Activated CD8-positive, alpha-beta T cell treated with anti-CD3 and anti-CD28 coated beads for 36 hours (primary cell): ENCODE measurements at regions of chr6 and their contacts with region 1.

Region 1: GRCh38 chr6:137921823-137922222 is 54.8 kb downstream of the TNFAIP3 start:
- DNase-seq: peak; percentile 50
- ATAC-seq: no peak
- H3K4me3 Mint-ChIP-seq: no peak overlapping the region
- H3K27ac Mint-ChIP-seq: no peak overlapping the region
- H3K4me1 Mint-ChIP-seq: peaks cover 63% of the 10 kb centered on the region
- H3K27me3 Mint-ChIP-seq: no peaks in the 10 kb centered on the region
- CTCF ChIP-seq: peak; percentile 41

Region 2: GRCh38 chr6:137910424-137910834 is 11.4 kb before region 1 on chr6:
- CTCF ChIA-PET with region 1: interaction called, 12 read pairs
- POLR2A ChIA-PET with region 1: interaction called, 8 read pairs
- intact Hi-C with region 1: loop called (anchors 2 kb)
- DNase-seq: no peak
- ATAC-seq: no peak
- H3K4me3 Mint-ChIP-seq: no peak overlapping the region
- H3K27ac Mint-ChIP-seq: peak overlapping the region; percentile 60
- H3K4me1 Mint-ChIP-seq: peaks cover 55% of the 10 kb centered on the region
- H3K27me3 Mint-ChIP-seq: no peaks in the 10 kb centered on the region
- CTCF ChIP-seq: no peak